ENCODE measurements at regions of chr7 and their contacts with region 1.

Region 1: GRCh38 chr7:11792166-11792565 is 39.8 kb downstream of the THSD7A start:
- DNase-seq: no peak
- H3K4me3 ChIP-seq: no peak overlapping the region
- H3K27ac ChIP-seq: no peak overlapping the region
- H3K4me1 ChIP-seq: no peaks in the 10 kb centered on the region
- H3K27me3 ChIP-seq: peaks cover 2% of the 10 kb centered on the region
- CTCF ChIP-seq: no peak

Region 2: DNA sequence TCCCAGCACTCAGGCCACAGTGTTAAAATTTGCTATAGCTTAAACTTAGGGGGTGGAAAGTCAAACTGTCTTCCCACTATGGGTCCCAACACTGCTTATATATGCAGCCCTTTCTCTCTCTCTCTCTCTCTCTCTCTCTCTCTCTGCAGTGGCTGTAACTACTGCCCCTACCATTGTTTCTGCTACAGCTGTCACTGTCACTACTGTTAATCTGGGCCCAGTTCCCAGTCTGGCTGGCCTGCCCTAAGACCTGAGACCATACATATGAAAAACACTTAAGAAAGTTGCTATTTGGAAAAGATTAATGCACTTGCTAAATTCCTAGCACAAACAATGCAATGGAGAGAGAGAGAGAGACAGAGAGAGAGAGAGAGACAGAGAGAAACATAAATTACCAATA is 38.7 kb before region 1 on chr7:
- CTCF ChIA-PET with region 1: no interaction called
- dilution Hi-C with region 1: loop called (anchors 5 kb)
- in situ Hi-C with region 1: no loop called
- intact Hi-C with region 1: no loop called
- DNase-seq: no peak
- H3K4me3 ChIP-seq: no peak overlapping the region
- H3K27ac ChIP-seq: no peak overlapping the region
- H3K4me1 ChIP-seq: no peaks in the 10 kb centered on the region
- H3K27me3 ChIP-seq: no peaks in the 10 kb centered on the region
- CTCF ChIP-seq: no peak

Region 3: DNA sequence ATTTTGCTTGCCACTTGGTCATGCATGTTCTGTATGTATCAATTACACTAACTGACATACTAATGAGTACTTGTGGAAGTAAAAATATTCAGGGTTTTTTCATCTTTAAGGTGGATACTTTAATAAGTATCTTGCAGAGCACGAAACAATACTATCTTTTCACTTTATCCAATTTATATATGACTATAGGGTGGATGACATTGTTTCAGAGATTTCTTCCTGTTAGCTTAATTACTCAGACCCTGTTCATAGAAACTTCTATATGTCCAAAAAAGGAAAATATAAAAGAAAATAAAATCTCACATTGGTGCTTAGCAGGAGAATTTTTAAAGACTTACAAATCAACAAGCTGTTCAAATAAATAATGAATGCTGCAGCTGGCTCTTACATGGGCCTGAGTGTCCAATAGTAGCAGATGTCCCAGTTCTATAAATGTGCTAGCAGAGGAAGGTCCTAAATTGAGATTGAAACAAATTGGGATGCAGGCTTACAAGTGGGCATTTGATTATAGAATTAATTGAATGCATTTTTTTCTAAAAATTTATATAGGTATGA is 131.3 kb after region 1 on chr7:
- CTCF ChIA-PET with region 1: no interaction called
- dilution Hi-C with region 1: no loop called
- in situ Hi-C with region 1: no loop called
- intact Hi-C with region 1: no loop called
- DNase-seq: no peak
- H3K4me3 ChIP-seq: no peak overlapping the region
- H3K27ac ChIP-seq: no peak overlapping the region
- H3K4me1 ChIP-seq: no peaks in the 10 kb centered on the region
- H3K27me3 ChIP-seq: no peaks in the 10 kb centered on the region
- CTCF ChIP-seq: no peak